B cell (primary cell): ENCODE measurements at regions of chr20 and their contacts with region 1.

Region 1: GRCh38 chr20:3767427-3768341 is at the start of gene ADISSP:
- DNase-seq: peak; percentile 97
- ATAC-seq: peak; percentile 87
- H3K4me3 ChIP-seq: peak within 1 kb of the TSS; percentile 48 to 97 (median 77)
- H3K4me3 Mint-ChIP-seq: peak within 1 kb of the TSS; percentile 96
- H3K27ac ChIP-seq: peak within 1 kb of the TSS; percentile 98 to 99
- H3K27ac Mint-ChIP-seq: peak within 1 kb of the TSS; percentile 97
- H3K4me1 ChIP-seq: peaks cover 12 to 31% of the 10 kb centered on the region in 2 donors
- H3K4me1 Mint-ChIP-seq: peaks cover 27% of the 10 kb centered on the region
- H3K27me3 ChIP-seq: no peaks in the 10 kb centered on the region
- H3K27me3 Mint-ChIP-seq: no peaks in the 10 kb centered on the region
- CTCF ChIP-seq: no peak
- total RNA-seq, gene ADISSP: 18.4 and 19.1 TPM in 2 replicates

Region 2: DNA sequence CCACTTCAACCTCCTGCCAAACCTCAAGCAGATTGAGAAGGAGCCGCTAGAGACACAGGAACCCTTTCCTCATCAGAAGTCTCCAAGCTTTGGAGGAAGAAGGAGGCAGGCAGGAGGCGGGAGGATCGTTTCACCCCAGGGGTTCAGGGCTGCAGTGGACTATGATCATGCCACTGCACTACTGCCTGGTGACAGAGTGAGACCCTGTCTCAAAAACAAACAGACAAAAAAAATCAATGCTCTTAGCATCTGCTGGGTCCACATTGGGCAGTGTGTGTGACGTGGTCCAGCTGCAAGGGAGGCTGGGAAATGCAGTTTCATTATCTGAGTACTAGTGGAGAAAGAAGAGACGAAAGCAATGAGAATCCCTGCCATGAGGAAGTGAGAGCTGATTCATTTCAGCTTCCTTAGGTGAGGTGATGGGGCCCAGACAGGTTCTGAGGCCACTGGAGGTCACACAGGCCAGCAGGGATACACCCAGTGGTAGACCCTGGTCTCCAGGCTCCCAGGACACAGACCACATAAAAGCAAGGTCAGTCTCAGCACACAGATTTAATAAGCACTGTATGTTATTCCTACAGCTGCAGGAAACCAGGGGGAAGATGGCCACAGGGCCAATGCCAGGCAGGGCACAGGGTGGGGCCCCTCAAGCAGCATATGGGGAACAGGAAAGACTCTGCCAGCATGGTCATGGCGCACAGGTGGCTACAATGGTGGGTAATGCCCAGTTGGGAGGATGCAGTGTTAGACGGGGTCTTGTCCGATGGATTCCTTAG is 108.8 kb before region 1 on chr20:
- CTCF ChIA-PET with region 1: no interaction called
- POLR2A ChIA-PET with region 1: no interaction called
- intact Hi-C with region 1: no loop called
- DNase-seq: peak; percentile 27
- ATAC-seq: peak; percentile 43
- H3K4me3 ChIP-seq: no peak overlapping the region
- H3K4me3 Mint-ChIP-seq: peak overlapping the region; percentile 38
- H3K27ac ChIP-seq: no peak overlapping the region
- H3K27ac Mint-ChIP-seq: no peak overlapping the region
- H3K4me1 ChIP-seq: peaks cover 5 to 10% of the 10 kb centered on the region in 2 donors
- H3K4me1 Mint-ChIP-seq: peaks cover 13% of the 10 kb centered on the region
- H3K27me3 ChIP-seq: peaks cover 0 to 20% (median 1%) of the 10 kb centered on the region in 4 experiments
- H3K27me3 Mint-ChIP-seq: peaks cover 26% of the 10 kb centered on the region
- CTCF ChIP-seq: no peak

Region 3: DNA sequence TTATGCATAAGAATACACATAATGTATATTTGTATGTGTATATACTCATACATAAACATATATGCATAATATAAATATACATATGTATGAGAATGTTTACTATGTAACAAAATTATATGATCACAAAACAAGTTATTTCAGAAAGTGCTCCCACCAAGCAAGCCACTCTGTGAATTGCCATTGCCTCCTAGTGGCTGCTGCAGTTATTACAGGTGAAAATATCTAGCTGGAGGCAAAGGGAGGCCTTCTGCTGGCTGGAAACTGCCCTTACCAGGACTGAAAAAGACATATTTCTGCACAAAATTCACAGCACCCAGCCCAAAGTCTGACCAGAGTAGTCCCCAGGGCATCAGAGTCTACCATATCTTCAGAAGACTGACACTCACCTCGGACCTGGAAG is 71.5 kb before region 1 on chr20:
- CTCF ChIA-PET with region 1: no interaction called
- POLR2A ChIA-PET with region 1: no interaction called
- intact Hi-C with region 1: no loop called
- DNase-seq: no peak
- ATAC-seq: no peak
- H3K4me3 ChIP-seq: no peak overlapping the region
- H3K4me3 Mint-ChIP-seq: no peak overlapping the region
- H3K27ac ChIP-seq: no peak overlapping the region
- H3K27ac Mint-ChIP-seq: no peak overlapping the region
- H3K4me1 ChIP-seq: no peaks in the 10 kb centered on the region
- H3K4me1 Mint-ChIP-seq: no peaks in the 10 kb centered on the region
- H3K27me3 ChIP-seq: no peaks in the 10 kb centered on the region
- H3K27me3 Mint-ChIP-seq: no peaks in the 10 kb centered on the region
- CTCF ChIP-seq: no peak

Region 4: DNA sequence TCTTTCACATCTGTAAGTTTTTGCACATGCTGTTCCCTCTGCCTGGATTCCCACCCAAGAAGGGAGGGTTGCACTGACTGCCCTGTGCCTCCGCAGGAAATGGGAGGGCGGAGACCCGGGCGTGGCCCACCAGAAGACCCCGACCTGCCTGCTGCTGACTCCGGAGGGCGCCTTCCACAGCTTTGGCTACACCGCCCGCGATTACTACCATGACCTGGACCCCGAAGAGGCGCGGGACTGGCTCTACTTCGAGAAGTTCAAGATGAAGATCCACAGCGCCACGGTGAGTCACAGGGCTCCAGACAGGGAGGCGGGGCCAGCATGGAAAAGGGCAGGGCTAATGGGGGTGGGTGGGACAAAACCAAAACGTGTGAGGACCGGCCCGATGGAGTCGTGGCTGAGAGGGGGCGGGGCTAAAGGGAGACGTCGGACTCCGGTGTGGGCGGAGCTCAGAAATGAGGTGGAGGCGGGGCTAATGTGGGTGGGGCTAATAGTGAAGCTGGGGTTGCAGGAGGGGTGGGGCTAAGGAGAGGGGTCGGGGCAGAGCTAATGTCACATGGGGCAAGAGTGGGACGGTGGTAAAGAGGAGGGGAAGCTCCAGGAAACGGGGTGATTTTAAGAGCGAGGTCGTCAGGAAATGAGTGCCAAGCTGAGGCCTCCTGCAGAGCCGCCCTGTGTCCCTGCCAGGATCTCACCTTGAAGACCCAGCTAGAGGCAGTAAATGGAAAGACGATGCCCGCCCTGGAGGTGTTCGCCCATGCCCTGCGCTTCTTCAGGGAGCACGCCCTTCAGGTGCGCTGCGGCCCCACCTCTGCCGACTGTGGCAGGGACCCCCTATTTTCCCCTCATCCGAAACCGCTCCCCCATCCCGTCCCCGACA is 22.6 kb before region 1 on chr20:
- CTCF ChIA-PET with region 1: interaction called, 3 read pairs
- POLR2A ChIA-PET with region 1: no interaction called
- intact Hi-C with region 1: loop called (anchors 2 kb)
- DNase-seq: peak; percentile 65
- ATAC-seq: peak; percentile 75
- H3K4me3 ChIP-seq: peak overlapping the region in 2 of 5 experiments; percentile 9 to 18
- H3K4me3 Mint-ChIP-seq: peak overlapping the region; percentile 30
- H3K27ac ChIP-seq: no peak overlapping the region
- H3K27ac Mint-ChIP-seq: no peak overlapping the region
- H3K4me1 ChIP-seq: peaks cover 0 to 13% of the 10 kb centered on the region in 2 donors
- H3K4me1 Mint-ChIP-seq: peaks cover 4% of the 10 kb centered on the region
- H3K27me3 ChIP-seq: peaks cover 0 to 26% (median 2%) of the 10 kb centered on the region in 4 experiments
- H3K27me3 Mint-ChIP-seq: peaks cover 26% of the 10 kb centered on the region
- CTCF ChIP-seq: no peak

Region 5: GRCh38 chr20:3786665-3787323 is 19.1 kb after region 1 on chr20 and contains the start of gene CENPB:
- CTCF ChIA-PET with region 1: interaction called, 38 read pairs
- POLR2A ChIA-PET with region 1: interaction called, 17 read pairs
- intact Hi-C with region 1: loop called (anchors 1 kb)
- DNase-seq: peak; percentile 91
- ATAC-seq: peak; percentile 96
- H3K4me3 ChIP-seq: peak within 1 kb of the TSS; percentile 46 to 62 (median 59)
- H3K4me3 Mint-ChIP-seq: peak within 1 kb of the TSS; percentile 89
- H3K27ac ChIP-seq: peak within 1 kb of the TSS; percentile 16 to 56
- H3K27ac Mint-ChIP-seq: peak within 1 kb of the TSS; percentile 88
- H3K4me1 ChIP-seq: peaks cover 8 to 18% of the 10 kb centered on the region in 2 donors
- H3K4me1 Mint-ChIP-seq: peaks cover 30% of the 10 kb centered on the region
- H3K27me3 ChIP-seq: no peaks in the 10 kb centered on the region
- H3K27me3 Mint-ChIP-seq: no peaks in the 10 kb centered on the region
- CTCF ChIP-seq: peak; percentile 88
- total RNA-seq, gene CENPB: 43.7 and 46.4 TPM in 2 replicates

Region 6: GRCh38 chr20:3820048-3820900 is 52.6 kb after region 1 on chr20 and contains the start of gene AP5S1:
- CTCF ChIA-PET with region 1: interaction called, 29 read pairs
- POLR2A ChIA-PET with region 1: interaction called, 14 read pairs
- intact Hi-C with region 1: loop called (anchors 1 kb)
- DNase-seq: peak; percentile 99
- ATAC-seq: peak; percentile 84
- H3K4me3 ChIP-seq: peak within 1 kb of the TSS; percentile 62 to 85 (median 75)
- H3K4me3 Mint-ChIP-seq: peak within 1 kb of the TSS; percentile 97
- H3K27ac ChIP-seq: peak within 1 kb of the TSS; percentile 97 to 98
- H3K27ac Mint-ChIP-seq: peak within 1 kb of the TSS; percentile 100
- H3K4me1 ChIP-seq: peaks cover 13 to 15% of the 10 kb centered on the region in 2 donors
- H3K4me1 Mint-ChIP-seq: peaks cover 15% of the 10 kb centered on the region
- H3K27me3 ChIP-seq: no peaks in the 10 kb centered on the region
- H3K27me3 Mint-ChIP-seq: no peaks in the 10 kb centered on the region
- CTCF ChIP-seq: peak; percentile 97
- total RNA-seq, gene AP5S1: 12.6 and 12.8 TPM in 2 replicates

Region 7: GRCh38 chr20:4014031-4014474 is 246.4 kb after region 1 on chr20:
- CTCF ChIA-PET with region 1: no interaction called
- POLR2A ChIA-PET with region 1: no interaction called
- intact Hi-C with region 1: loop called (anchors 1 kb)
- DNase-seq: peak; percentile 55
- ATAC-seq: no peak
- H3K4me3 ChIP-seq: peak overlapping the region in 1 of 5 experiments; percentile 69
- H3K4me3 Mint-ChIP-seq: peak overlapping the region; percentile 78
- H3K27ac ChIP-seq: no peak overlapping the region
- H3K27ac Mint-ChIP-seq: peak overlapping the region; percentile 2
- H3K4me1 ChIP-seq: peaks cover 14 to 30% of the 10 kb centered on the region in 2 donors
- H3K4me1 Mint-ChIP-seq: peaks cover 28% of the 10 kb centered on the region
- H3K27me3 ChIP-seq: no peaks in the 10 kb centered on the region
- H3K27me3 Mint-ChIP-seq: no peaks in the 10 kb centered on the region
- CTCF ChIP-seq: peak; percentile 25